ENCODE measurements at regions of chrX and their contacts with region 1.

Region 1: GRCh38 chrX:14051416-14051815 is 21.7 kb upstream of the GEMIN8 start:
- DNase-seq: no peak
- H3K4me3 ChIP-seq: no peak overlapping the region
- H3K27ac ChIP-seq: no peak overlapping the region
- H3K4me1 ChIP-seq: no peaks in the 10 kb centered on the region
- H3K27me3 ChIP-seq: no peaks in the 10 kb centered on the region; the same call in 1 of the 2 replicates
- CTCF ChIP-seq: no peak
- EP300 ChIP-seq: no peak
- RAD21 ChIP-seq: peak; percentile 48

Region 2: GRCh38 chrX:14039344-14039743 is 12.1 kb before region 1 on chrX:
- CTCF ChIA-PET with region 1: interaction called, 10 read pairs
- POLR2A ChIA-PET with region 1: no interaction called
- DNase-seq: peak; percentile 49
- H3K4me3 ChIP-seq: no peak overlapping the region; a peak in 1 of 4 replicates
- H3K27ac ChIP-seq: no peak overlapping the region
- H3K4me1 ChIP-seq: no peaks in the 10 kb centered on the region
- H3K27me3 ChIP-seq: peaks cover 12% of the 10 kb centered on the region; the same call in 1 of the 2 replicates
- CTCF ChIP-seq: peak; percentile 88
- EP300 ChIP-seq: peak in 1 of 2 experiments; percentile 49; a peak in 1 of 4 replicates
- RAD21 ChIP-seq: peak; percentile 85